PC-9 (cell line): ENCODE measurements at regions of chr4 and their contacts with region 1.

Region 1: GRCh38 chr4:89215736-89216135 is 91.9 kb downstream of the GPRIN3 start:
- DNase-seq: no peak
- H3K4me3 ChIP-seq: no peak overlapping the region
- H3K27ac ChIP-seq: no peak overlapping the region
- H3K4me1 ChIP-seq: no peaks in the 10 kb centered on the region
- H3K27me3 ChIP-seq: no peaks in the 10 kb centered on the region
- CTCF ChIP-seq: no peak

Region 2: GRCh38 chr4:89129080-89129640 is 86.6 kb before region 1 on chr4:
- CTCF ChIA-PET with region 1: no interaction called
- POLR2A ChIA-PET with region 1: no interaction called
- intact Hi-C with region 1: no loop called
- DNase-seq: no peak
- H3K4me3 ChIP-seq: no peak overlapping the region
- H3K27ac ChIP-seq: no peak overlapping the region
- H3K4me1 ChIP-seq: peaks cover 4% of the 10 kb centered on the region; the same call in 1 of the 2 replicates
- H3K27me3 ChIP-seq: no peaks in the 10 kb centered on the region
- CTCF ChIP-seq: no peak

Region 3: DNA sequence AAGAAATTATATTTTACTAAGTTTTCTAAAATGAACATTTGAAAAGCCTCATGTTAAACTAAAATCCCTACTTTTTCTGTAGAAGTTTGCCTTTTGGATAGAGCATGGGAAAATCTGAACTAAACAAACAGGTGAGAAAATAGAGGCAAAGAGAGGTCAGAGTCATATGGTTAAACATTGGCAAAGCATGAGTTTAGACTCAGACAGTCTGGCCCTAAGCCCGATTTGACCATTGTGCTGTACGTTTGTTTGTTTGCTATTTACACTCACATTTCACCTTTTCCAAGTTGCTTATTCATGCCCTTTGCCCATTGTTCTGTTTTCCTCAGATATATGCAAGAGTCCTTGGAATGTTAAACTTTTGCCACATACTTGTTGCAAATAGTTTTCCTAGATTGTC is 19.0 kb before region 1 on chr4:
- CTCF ChIA-PET with region 1: no interaction called
- POLR2A ChIA-PET with region 1: no interaction called
- intact Hi-C with region 1: no loop called
- DNase-seq: no peak
- H3K4me3 ChIP-seq: no peak overlapping the region
- H3K27ac ChIP-seq: peak overlapping the region; percentile 48
- H3K4me1 ChIP-seq: no peaks in the 10 kb centered on the region; the same call in 1 of the 2 replicates
- H3K27me3 ChIP-seq: no peaks in the 10 kb centered on the region
- CTCF ChIP-seq: no peak

Region 4: DNA sequence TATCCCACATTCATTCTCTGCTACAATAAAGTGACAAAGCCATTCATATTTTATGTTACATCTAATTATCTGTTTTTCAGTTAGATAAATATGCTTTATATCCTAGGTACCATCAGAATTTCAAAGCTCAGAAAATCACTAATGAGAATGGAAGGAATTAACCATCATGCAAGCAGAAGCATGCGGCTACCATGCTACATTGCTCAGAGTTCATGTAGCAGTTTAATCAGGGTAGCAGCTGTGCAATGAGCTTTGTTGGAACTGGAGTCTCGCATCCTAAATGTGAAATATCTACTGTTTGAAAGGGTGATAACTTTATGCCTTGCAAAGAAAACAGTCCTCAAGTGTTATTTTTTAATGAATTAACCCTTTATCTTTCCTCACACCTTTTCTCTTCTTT is 543.7 kb after region 1 on chr4:
- CTCF ChIA-PET with region 1: interaction called, 10 read pairs
- POLR2A ChIA-PET with region 1: no interaction called
- intact Hi-C with region 1: no loop called
- DNase-seq: no peak
- H3K4me3 ChIP-seq: no peak overlapping the region
- H3K27ac ChIP-seq: no peak overlapping the region
- H3K4me1 ChIP-seq: no peaks in the 10 kb centered on the region
- H3K27me3 ChIP-seq: no peaks in the 10 kb centered on the region
- CTCF ChIP-seq: no peak